ENCODE measurements at regions of chr2 and their contacts with region 1.

Region 1: DNA sequence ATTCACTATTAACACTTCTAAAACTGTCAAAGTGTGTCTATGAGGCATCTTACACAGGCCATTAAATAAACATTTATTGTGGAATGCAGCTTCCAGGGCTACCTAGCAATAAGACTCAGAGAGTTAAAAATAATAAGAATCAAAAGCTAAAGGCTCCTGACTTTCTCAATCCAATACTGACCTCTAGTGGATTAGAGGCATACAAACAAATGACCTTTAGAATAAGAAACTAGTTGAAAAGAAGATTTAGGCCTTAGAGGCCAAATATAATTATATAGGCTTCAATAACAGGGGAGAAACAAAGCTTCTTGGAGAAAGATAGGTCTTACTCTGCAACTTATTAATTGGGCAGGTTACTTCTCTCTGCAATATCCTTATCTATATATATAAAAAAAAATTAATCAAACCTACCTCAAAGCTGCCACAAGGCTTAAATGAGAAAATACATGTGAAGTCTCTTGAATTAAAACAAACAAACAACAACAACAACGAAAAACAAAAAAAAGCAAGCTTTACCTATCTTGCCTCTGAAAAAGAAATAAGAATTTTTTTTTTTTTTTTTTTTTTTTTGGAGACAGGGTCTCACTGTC is 246.1 kb downstream of the EXOC6B start:
- DNase-seq: peak; percentile 71
- H3K4me3 ChIP-seq: no peak overlapping the region
- H3K27ac ChIP-seq: no peak overlapping the region
- H3K4me1 ChIP-seq: peaks cover 46% of the 10 kb centered on the region
- H3K27me3 ChIP-seq: no peaks in the 10 kb centered on the region

Region 2: DNA sequence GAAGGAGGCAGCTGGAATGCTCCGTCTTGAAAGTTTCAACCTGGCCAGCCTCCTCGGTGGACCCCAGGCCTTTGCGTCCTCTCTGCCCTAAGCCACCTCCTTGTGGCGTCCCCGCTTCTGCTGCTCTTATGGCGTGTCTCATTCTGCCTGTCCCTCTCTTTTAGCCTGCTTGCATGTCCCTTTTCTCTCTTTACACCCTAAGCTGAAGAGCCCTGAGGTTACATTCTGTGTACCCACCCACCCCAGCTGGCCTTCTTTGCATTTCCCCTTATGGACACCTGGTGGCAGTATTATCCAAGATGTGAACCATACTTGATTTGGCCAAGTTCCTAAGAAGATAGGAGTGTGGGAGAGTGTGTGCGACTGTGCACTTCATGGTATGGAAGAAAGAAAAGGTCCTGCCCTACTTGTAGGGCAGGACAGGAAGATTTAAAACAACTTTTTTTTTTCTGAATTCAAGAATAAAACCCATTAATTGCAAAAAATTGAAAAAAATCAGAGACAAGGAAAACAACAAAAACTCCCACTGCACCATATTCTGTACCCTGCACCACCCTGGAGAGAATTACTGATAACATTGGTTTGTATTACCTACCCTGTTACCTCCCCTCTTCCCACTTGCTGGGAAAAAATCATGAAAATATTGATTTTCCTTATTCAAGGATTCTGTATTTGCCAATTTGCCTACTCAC is 1048.9 kb before region 1 on chr2:
- in situ Hi-C with region 1: loop called (anchors 10 kb)
- DNase-seq: peak; percentile 70
- H3K4me3 ChIP-seq: no peak overlapping the region
- H3K27ac ChIP-seq: no peak overlapping the region
- H3K4me1 ChIP-seq: no peaks in the 10 kb centered on the region
- H3K27me3 ChIP-seq: peaks cover 30% of the 10 kb centered on the region

Region 3: GRCh38 chr2:71801969-71802368 is 777.7 kb before region 1 on chr2:
- in situ Hi-C with region 1: loop called (anchors 10 kb)
- DNase-seq: peak; percentile 79
- H3K4me3 ChIP-seq: no peak overlapping the region
- H3K27ac ChIP-seq: no peak overlapping the region
- H3K4me1 ChIP-seq: no peaks in the 10 kb centered on the region
- H3K27me3 ChIP-seq: no peaks in the 10 kb centered on the region

Region 4: DNA sequence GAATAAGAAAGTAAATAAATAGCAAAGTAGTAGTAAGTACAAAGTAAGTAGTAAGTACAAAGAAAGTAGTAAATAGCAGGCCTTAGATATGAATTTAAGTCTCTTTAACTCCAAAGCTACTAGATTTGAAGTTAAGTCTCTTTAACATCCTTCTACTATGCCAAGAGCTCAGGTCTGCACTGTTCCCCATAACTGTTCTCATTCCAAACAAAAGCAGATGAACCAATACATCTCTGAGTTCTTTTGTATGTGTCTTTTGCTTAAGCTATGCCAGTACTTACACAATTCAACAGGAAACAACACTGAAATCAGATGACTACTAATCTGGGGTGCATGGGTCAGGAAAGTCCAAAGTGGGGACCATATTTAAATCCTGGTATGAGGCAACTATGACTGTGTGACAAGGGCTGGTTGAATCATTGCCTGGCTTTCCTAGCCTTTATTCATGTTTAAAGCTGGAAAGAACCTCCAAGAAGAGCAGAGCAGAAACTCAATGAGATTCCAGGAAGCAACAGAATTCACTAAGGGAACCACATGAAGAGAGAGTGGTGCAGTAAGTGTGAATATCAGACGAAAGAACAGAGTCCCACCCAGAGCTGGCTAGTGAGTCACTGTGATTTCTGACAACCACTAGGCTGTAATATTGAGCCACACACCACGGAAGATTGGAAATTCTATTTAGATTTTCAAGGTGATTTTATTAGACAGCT is 381.0 kb before region 1 on chr2:
- in situ Hi-C with region 1: loop called (anchors 25 kb)
- DNase-seq: peak; percentile 87
- H3K4me3 ChIP-seq: no peak overlapping the region
- H3K27ac ChIP-seq: peak overlapping the region; percentile 56
- H3K4me1 ChIP-seq: peaks cover 17% of the 10 kb centered on the region
- H3K27me3 ChIP-seq: no peaks in the 10 kb centered on the region